GM23248 (cell line): ENCODE measurements at regions of chr12 and their contacts with region 1.

Region 1: GRCh38 chr12:81450920-81451739 is 308.0 kb downstream of the PPFIA2 start:
- DNase-seq: peak; percentile 79
- H3K4me3 ChIP-seq: no peak overlapping the region
- H3K27ac ChIP-seq: no peak overlapping the region
- H3K4me1 ChIP-seq: no peaks in the 10 kb centered on the region
- H3K27me3 ChIP-seq: no peaks in the 10 kb centered on the region

Region 2: GRCh38 chr12:81339064-81339463 is 112.1 kb before region 1 on chr12:
- in situ Hi-C with region 1: no loop called
- DNase-seq: no peak
- H3K4me3 ChIP-seq: no peak overlapping the region
- H3K27ac ChIP-seq: no peak overlapping the region
- H3K4me1 ChIP-seq: no peaks in the 10 kb centered on the region
- H3K27me3 ChIP-seq: no peaks in the 10 kb centered on the region

Region 3: GRCh38 chr12:81627336-81628189 is 176.4 kb after region 1 on chr12:
- in situ Hi-C with region 1: loop called (anchors 5 kb)
- DNase-seq: peak; percentile 77
- H3K4me3 ChIP-seq: peak overlapping the region; percentile 26; the same call in 1 of the 2 replicates
- H3K27ac ChIP-seq: no peak overlapping the region
- H3K4me1 ChIP-seq: no peaks in the 10 kb centered on the region
- H3K27me3 ChIP-seq: no peaks in the 10 kb centered on the region; the same call in 1 of the 2 replicates